ENCODE measurements at regions of chr9 and their contacts with region 1.

Region 1: DNA sequence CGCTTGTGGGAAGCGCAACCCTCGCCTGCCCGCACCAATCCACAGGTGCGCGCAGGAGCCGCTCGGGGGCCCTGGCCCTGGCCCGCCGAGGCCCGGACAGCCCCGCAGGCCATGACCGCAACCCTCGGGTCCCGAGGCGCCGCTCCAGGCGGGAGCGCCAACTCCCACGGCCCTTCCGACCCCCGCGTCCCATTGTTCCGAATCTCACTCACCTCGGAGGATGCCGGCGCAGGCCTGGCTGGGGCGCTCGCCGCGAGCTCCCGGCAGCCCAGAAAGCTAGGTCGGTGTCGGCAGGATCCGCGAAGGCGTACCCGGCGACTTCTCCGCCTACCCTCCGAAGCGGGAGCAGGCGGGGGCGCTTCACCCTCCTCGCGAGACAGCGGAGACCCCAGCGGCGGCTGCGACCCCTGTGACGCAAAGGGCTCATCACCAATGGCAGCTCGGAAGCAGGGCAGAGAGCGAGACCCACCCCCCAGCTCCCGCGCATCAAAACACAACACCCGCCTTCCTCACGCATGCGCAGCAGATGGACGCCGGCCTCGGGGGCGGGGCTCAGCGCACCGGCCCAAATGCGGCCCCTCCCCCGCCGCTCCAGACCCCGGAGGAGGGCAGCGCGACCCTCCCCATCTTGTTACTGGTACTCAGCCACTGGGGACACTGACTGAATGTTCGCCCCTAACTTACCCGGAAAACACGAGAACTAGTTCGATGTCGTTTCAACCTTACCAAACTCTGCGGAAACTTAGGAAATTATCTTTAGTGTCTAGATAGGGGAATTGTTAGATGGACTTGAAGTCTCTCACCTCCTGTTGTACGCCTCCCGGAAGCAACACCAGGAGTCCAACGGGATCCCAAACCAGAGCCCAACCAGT is 1.3 kb upstream of the SMIM27 start:
- DNase-seq: peak; percentile 91
- H3K4me3 Mint-ChIP-seq: peak overlapping the region; percentile 93
- H3K27ac Mint-ChIP-seq: peak overlapping the region; percentile 99
- H3K4me1 Mint-ChIP-seq: peaks cover 38% of the 10 kb centered on the region
- H3K27me3 Mint-ChIP-seq: no peaks in the 10 kb centered on the region

Region 2: DNA sequence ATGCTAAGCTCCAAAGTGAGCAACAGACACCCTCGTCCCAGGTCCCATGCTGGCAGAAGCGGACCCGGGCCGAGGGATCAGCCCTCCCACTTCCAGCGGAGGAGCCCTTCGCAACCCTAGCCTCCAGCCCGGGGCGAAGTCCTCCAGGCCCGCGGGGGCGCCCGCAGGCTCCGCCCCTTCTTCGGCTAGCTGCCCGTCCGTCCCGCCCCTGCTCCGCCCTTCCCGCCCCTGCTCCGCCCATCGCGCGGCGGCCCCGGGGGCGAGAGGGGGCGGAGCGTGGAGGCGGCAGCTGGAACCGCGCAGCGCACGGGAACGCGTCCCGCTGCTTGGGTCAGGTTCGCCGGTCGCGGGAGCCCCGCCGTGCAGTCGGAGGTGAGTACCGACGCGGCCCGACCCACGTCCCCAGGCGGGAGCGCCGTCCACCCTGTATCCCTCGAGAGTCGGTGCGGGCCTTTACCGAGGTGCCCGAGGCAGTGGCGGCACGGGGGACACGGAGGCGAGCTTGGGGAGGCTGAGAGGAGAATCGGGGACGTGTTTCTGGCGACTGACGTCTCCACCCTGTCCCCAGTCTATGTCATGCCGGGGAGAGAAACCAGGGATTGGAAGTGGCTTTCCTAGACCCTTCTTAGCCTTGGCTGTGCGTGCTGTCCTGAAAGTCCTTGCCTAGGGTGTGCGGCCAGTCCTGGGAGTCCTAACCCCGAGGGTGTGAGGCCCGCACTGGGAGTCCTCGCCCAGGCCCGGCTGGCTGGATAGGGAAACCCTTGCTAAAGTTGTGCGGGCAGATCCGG is 166.2 kb before region 1 on chr9 and contains the start of gene ACO1:
- intact Hi-C with region 1: loop called (anchors 1 kb)
- DNase-seq: peak; percentile 84
- H3K4me3 Mint-ChIP-seq: peak within 1 kb of the TSS; percentile 81
- H3K27ac Mint-ChIP-seq: peak within 1 kb of the TSS; percentile 38
- H3K4me1 Mint-ChIP-seq: peaks cover 15% of the 10 kb centered on the region
- H3K27me3 Mint-ChIP-seq: peaks cover 21% of the 10 kb centered on the region
- total RNA-seq, gene ACO1: 5.6 and 6.9 TPM in 2 replicates

Region 3: GRCh38 chr9:32524892-32525708 is 25.7 kb before region 1 on chr9:
- intact Hi-C with region 1: loop called (anchors 1 kb)
- DNase-seq: no peak
- H3K4me3 Mint-ChIP-seq: peak overlapping the region; percentile 92
- H3K27ac Mint-ChIP-seq: peak overlapping the region; percentile 86
- H3K4me1 Mint-ChIP-seq: peaks cover 53% of the 10 kb centered on the region
- H3K27me3 Mint-ChIP-seq: no peaks in the 10 kb centered on the region

Region 4: DNA sequence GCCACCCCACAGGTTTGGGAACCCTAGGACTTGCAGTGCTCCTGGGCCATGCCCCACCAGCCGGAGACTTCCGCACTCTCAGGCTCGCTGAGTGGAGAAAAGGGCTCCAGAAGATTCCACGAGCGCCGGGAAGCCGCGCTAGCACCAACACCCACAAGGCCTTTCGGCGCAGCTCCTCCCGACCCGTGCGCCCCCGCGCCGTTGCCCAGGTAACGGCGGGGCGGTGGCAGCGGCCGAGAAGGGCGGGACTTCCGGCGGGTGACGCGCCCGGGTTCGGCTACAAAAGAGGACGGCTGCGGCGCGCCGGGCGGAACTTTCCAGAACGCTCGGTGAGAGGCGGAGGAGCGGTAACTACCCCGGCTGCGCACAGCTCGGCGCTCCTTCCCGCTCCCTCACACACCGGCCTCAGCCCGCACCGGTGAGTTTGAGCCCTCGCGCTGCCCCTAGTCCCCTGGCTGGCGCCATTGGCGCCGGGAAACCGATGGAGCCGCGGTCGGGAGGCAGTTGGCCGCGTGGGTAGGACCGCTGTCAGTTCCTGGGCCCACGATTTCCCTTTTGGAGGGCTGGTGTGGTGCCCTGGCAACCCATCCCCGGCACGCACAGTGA is 474.3 kb after region 1 on chr9 and contains the start of gene DNAJA1:
- intact Hi-C with region 1: loop called (anchors 1 kb)
- DNase-seq: peak; percentile 95
- H3K4me3 Mint-ChIP-seq: peak within 1 kb of the TSS; percentile 94
- H3K27ac Mint-ChIP-seq: peak within 1 kb of the TSS; percentile 98
- H3K4me1 Mint-ChIP-seq: peaks cover 68% of the 10 kb centered on the region
- H3K27me3 Mint-ChIP-seq: no peaks in the 10 kb centered on the region
- total RNA-seq, gene DNAJA1: 296 and 312 TPM in 2 replicates

Region 5: GRCh38 chr9:34178520-34179212 is 1627.9 kb after region 1 on chr9 and contains the start of gene UBAP1:
- intact Hi-C with region 1: loop called (anchors 5 kb)
- DNase-seq: peak; percentile 95
- H3K4me3 Mint-ChIP-seq: peak within 1 kb of the TSS; percentile 92
- H3K27ac Mint-ChIP-seq: peak within 1 kb of the TSS; percentile 94
- H3K4me1 Mint-ChIP-seq: peaks cover 5% of the 10 kb centered on the region
- H3K27me3 Mint-ChIP-seq: no peaks in the 10 kb centered on the region
- total RNA-seq, gene UBAP1: 30.0 and 33.4 TPM in 2 replicates